ENCODE measurements at regions of chr1 and their contacts with region 1.

Region 1: DNA sequence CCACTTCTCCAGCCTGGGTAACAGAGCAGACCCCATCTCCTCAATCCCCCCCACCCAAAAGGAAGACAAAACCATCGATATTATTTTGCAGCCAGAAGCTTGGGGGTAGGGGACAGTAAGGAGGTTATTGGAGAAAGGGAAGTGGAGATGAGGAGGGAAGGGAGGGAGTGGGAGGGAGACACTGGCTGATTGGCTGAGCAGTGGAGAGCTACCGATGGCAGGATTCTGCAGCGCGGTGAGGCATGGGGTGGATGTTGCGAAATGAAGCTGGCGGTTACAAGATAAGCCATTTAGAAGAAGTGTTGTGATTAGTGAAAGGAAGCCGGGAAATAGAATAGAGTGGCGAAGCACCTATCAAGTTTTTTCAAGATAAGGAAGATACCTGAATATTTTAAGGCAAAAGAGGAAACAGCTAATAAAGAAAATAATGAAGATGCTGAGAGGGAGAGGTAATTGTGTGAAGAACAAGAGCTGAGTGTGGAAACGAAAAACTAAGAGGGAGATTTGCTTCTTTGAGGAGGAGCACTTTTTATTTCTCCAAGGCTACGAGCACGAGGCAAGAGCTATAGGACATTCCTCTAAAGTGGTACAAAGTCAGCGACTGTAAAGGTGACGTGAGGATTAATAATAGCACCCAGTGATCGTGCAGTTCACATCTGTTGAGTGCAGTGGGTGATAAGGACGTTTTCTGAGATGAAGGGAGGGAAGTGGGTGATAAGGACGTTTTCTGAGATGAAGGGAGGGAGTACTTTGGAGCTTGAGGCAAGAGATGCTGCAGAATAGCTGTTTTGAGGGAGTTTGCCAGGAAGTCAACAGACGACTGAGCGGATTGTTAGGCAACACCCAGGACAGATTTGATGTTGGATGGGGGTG is 103.2 kb upstream of the KIF26B start:
- DNase-seq: peak; percentile 39 to 54 (median 41)
- H3K4me3 ChIP-seq: no peak overlapping the region
- H3K27ac ChIP-seq: no peak overlapping the region
- H3K4me1 ChIP-seq: peaks cover 5% of the 10 kb centered on the region
- H3K27me3 ChIP-seq: no peaks in the 10 kb centered on the region
- CTCF ChIP-seq: no peak
- EP300 ChIP-seq: no peak
- POLR2A ChIP-seq: no peak

Region 2: DNA sequence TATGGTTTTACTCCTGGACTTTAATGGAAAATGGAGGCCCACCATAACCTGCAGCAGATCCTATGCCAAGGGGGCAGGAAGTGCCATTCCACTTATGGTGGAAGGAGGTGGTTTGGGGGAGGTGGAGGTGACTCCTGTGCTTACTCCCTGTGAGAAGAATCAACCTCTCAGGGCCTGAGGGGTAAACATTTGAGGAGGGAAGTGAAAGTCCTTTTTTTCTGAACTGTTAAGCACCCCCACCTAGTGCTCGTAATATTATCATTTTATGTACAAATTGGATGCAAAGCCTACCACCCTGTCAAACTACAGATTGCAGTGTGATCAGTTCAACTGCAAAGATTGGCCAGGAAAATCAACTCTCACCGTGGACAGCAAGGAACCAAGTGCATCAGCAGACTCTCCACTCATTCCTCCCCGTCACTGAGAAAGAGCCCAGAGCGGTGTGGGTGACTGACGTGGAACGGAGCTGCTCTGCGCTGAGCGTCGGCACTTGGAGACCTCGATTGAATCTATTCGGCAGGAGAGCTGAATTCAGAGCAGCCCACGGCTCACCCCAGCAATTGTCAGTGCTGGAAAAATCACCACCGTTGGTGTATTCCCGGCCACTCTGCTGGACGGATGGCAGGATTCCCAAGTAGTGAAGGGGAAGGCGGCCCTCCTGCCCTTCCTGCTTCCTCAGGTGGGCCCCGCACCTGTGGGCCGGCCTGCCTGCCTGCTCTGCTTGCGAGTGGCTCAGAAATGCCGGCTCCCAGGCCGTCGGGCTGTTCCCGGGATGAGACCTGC is 262.9 kb before region 1 on chr1:
- intact Hi-C with region 1: loop called in 1 of 4 experiments (anchors 10 kb)
- DNase-seq: no peak
- H3K4me3 ChIP-seq: no peak overlapping the region
- H3K27ac ChIP-seq: no peak overlapping the region
- H3K4me1 ChIP-seq: peaks cover 1% of the 10 kb centered on the region
- H3K27me3 ChIP-seq: no peaks in the 10 kb centered on the region
- CTCF ChIP-seq: no peak
- EP300 ChIP-seq: no peak
- POLR2A ChIP-seq: no peak

Region 3: DNA sequence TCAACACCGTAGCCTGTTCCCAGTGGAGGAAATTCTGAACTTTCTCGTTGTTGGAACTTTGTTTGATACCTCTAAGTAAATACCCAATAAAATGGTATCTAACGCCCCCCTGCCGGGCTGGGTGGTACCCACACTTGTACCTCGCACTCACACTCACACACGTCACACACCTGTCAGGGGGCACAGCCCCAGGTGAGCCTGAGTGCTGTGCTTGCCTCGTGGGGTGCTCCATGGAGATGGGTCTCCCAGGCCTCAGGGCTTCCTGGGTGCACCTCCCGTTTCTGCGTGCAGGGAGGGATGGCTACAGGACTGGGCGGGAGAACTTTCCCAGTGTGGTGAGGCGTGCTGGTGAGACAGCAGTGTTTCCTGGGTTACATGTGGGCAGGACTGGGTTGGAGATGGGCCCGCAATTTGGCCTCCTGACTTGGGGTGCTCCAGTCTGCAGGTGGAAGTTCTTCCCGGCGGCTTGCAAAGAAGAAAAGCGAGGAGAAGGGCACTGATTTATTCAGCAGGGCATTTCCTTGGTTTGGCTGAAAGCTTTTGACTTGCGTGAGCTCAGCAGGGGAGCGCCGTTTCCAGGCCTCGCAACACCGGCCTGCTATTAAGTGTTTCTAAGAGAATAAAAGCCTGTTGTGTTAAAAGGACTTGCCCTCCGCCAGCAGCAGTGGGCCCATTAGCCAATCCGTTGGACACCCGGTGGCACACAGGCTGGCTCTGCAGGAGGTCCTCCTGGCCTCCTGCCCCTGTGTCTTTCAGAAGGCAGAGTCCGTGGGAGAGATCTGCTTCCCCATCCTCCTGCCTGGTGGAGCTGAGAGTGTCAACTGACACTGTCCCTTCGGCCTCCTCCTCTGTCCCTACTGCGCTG is 182.9 kb after region 1 on chr1:
- intact Hi-C with region 1: no loop called
- DNase-seq: no peak
- H3K4me3 ChIP-seq: no peak overlapping the region
- H3K27ac ChIP-seq: no peak overlapping the region
- H3K4me1 ChIP-seq: no peaks in the 10 kb centered on the region
- H3K27me3 ChIP-seq: no peaks in the 10 kb centered on the region
- CTCF ChIP-seq: no peak
- EP300 ChIP-seq: no peak
- POLR2A ChIP-seq: no peak